ENCODE measurements at regions of chr3 and their contacts with region 1.

Region 1: DNA sequence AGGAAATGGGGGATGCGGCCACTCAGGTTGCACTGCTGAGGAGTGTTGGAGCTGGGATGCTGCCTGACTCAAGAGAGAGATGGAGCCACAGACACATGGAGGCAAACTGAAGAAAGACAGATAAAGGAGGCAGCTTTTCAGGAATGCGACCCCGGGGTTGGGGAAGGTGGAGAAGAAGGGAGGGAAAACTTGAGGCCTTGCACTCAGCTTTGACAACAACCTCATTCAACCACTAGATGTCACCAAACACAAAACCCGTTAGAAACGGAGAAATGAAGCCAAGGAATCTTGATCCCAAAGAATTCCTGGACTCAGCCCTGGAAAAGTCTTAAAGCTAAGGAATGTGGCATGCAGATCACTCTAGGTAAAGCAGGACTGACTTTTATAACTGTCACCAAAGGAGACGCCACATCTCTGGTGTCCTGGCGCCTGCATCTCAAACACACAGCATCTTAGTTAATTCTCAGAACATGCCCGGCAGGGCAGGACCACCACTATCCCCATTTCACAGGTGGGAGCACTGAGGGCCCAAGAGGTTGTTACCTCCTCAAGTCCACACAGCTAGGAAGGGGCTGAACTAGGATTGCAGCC is 59.6 kb upstream of the LMCD1 start:
- DNase-seq: peak in 3 of 6 donors; percentile 10 to 41 (median 20)
- ATAC-seq: peak in 3 of 4 donors; percentile 42 to 50 (median 48)
- H3K4me3 ChIP-seq: no peak overlapping the region
- H3K27ac ChIP-seq: no peak overlapping the region
- H3K4me1 ChIP-seq: peaks cover 17 to 35% (median 30%) of the 10 kb centered on the region in 3 donors
- H3K27me3 ChIP-seq: no peaks in the 10 kb centered on the region
- CTCF ChIP-seq: peak; percentile 54 to 70 (median 62)

Region 2: DNA sequence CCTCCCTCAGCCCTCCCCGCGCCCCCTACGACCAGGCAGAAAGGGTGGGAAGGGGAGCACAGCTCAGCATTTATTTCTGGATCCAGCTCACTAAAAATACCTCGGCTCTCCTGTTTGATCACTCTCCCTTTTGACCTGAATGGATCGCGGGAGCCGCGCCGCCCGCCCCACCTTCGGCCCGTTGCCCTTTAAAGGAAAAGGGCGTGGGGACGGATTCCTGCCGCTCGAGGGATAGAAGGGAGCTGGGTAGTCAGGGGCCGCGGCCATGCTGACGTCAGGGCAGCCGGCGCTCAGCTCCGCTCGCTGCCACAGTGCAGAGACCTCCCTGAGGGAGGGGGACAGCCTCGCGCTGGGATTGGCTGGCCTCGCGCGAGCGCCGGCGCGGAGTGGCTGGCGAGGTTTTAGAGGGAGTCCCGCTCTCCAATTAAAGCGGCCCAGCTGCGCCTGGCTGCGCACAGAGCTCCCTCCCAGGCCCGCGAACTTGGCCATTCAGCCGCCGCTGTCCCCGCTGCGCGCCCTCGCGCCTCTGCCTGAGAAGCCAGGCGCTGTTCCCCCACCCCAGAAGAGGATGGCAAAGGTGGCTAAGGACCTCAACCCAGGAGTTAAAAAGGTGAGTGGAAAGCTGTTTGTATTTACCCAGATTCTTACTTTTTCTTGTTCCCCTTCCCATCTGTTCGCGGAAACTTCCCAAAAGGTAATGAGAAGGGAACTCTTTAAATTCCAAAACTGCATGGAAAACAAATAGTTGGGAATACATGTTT is 59.5 kb after region 1 on chr3 and contains the start of gene LMCD1:
- intact Hi-C with region 1: loop called in 1 of 3 experiments (anchors 10 kb)
- DNase-seq: peak; percentile 95 to 97 (median 96)
- ATAC-seq: peak; percentile 90 to 95 (median 94)
- H3K4me3 ChIP-seq: peak within 1 kb of the TSS; percentile 28 to 52 (median 44)
- H3K27ac ChIP-seq: peak within 1 kb of the TSS; percentile 75 to 96 (median 90)
- H3K4me1 ChIP-seq: peaks cover 0 to 59% (median 14%) of the 10 kb centered on the region in 3 donors
- H3K27me3 ChIP-seq: no peaks in the 10 kb centered on the region
- CTCF ChIP-seq: peak in 1 of 4 donors; percentile 18
- total RNA-seq, gene LMCD1: 14.4 to 32.0 (median 17.4) TPM

Region 3: GRCh38 chr3:8622873-8623691 is 181.0 kb after region 1 on chr3:
- intact Hi-C with region 1: loop called in 2 of 3 experiments (anchors 5 to 10 kb)
- DNase-seq: peak; percentile 46 to 84 (median 68)
- ATAC-seq: peak; percentile 93 to 97 (median 94)
- H3K4me3 ChIP-seq: no peak overlapping the region
- H3K27ac ChIP-seq: no peak overlapping the region
- H3K4me1 ChIP-seq: no peaks in the 10 kb centered on the region
- H3K27me3 ChIP-seq: no peaks in the 10 kb centered on the region
- CTCF ChIP-seq: peak; percentile 77 to 91 (median 87)